Spleen (tissue), 13 donors: ENCODE measurements at regions of chr19 and their contacts with region 1.

Region 1: DNA sequence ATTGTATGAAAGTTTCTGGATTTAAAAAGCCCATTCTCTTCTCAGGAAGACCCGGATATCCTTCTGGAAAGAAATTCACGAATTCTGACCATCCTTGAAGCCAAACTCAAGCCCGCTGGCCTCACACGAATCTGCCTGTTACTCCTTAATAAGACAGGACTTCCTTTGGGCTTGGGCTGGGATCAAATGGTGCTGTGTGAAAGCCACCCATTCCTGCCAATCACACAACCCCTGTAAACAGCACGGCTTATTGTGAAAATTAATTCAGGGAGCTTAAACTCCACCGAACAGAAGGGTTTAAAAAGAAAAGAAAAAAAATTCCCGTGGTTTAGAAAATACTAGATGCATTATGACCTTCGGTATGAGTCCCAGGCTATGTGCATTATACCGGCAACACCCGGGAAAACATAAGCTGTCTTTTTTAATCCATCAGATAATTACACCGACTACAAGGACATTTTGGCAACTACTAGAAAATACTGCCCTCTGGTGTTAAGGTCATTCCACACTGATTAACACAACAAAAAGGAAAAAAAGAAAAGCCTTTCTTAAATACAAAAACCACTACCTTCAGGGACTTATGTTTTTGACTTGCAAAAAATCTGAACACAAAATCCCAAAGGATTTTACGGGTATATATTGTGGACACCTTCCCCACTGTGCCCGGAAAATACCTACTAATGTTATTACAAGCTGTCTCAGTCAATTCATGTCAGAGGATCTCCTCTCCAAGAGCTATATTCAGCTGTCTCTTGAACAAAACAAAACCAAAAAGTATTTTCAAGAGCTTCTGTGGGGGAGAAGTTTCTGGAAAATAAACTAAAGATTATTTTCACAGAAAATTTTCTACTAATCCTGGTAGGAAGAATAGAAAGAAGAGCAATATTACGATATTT is 76.0 kb upstream of the LSM14A start:
- DNase-seq: no peak
- H3K4me3 ChIP-seq: no peak overlapping the region
- H3K27ac ChIP-seq: peak overlapping the region in 3 of 8 donors; percentile 39 to 60 (median 50)
- H3K4me1 ChIP-seq: peaks cover 0 to 9% (median 0%) of the 10 kb centered on the region in 6 donors
- H3K27me3 ChIP-seq: peaks cover 0 to 20% (median 0%) of the 10 kb centered on the region in 7 donors
- CTCF ChIP-seq: peak; percentile 20 to 73 (median 62)
- POLR2A ChIP-seq: no peak

Region 2: GRCh38 chr19:33778089-33778791 is 318.0 kb before region 1 on chr19:
- intact Hi-C with region 1: loop called (anchors 5 kb)
- DNase-seq: peak; percentile 97
- H3K4me3 ChIP-seq: peak overlapping the region in 5 of 8 donors; percentile 7 to 54 (median 10)
- H3K27ac ChIP-seq: no peak overlapping the region
- H3K4me1 ChIP-seq: peaks cover 0 to 43% (median 23%) of the 10 kb centered on the region in 6 donors
- H3K27me3 ChIP-seq: peaks cover 0 to 42% (median 0%) of the 10 kb centered on the region in 7 donors
- CTCF ChIP-seq: peak; percentile 98 to 100 (median 100)
- POLR2A ChIP-seq: no peak

Region 3: DNA sequence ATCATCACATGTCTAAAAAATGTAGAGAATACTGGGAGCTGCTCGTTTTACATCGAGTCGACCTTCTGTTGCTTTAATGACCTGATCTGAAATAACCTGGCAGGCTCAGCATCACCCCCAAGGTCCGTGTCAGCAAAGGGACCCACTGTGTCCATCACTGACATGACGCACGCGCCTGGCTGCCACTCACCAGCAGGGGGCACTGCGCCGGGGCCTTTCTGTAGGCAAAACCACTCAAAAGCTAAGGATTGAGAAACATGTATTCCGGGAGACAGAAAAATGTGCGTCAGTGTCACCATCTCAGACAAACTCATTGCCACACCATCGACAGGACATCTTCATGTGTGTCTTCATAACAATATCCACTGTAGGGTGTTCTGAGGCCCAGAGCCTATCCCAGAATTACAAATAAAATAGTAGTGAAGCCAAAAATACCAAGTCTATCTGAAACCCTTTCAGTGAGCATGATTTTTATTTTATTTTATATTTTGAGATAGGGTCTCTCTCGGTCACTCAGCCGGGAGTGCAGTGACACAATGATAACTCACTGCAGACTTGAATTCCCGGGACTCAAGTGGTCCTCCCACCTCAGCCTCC is 54.2 kb before region 1 on chr19:
- intact Hi-C with region 1: loop called (anchors 5 kb)
- DNase-seq: peak; percentile 87
- H3K4me3 ChIP-seq: no peak overlapping the region
- H3K27ac ChIP-seq: no peak overlapping the region
- H3K4me1 ChIP-seq: peaks cover 0 to 6% (median 0%) of the 10 kb centered on the region in 6 donors
- H3K27me3 ChIP-seq: peaks cover 0 to 2% (median 0%) of the 10 kb centered on the region in 7 donors
- CTCF ChIP-seq: peak; percentile 19 to 88 (median 74)
- POLR2A ChIP-seq: no peak